ENCODE measurements at regions of chr1 and their contacts with region 1.

Region 1: GRCh38 chr1:161132410-161133219 is at the start of gene DEDD:
- DNase-seq: peak; percentile 89
- H3K4me3 ChIP-seq: peak within 1 kb of the TSS; percentile 97
- H3K27ac ChIP-seq: peak within 1 kb of the TSS; percentile 93
- H3K27me3 ChIP-seq: no peaks in the 10 kb centered on the region
- CTCF ChIP-seq: 0 out of 2 replicates have a peak, but pooled peaks have one; percentile 8
- polyA plus RNA-seq, gene DEDD: 34.9 and 38.0 TPM in 2 replicates

Region 2: DNA sequence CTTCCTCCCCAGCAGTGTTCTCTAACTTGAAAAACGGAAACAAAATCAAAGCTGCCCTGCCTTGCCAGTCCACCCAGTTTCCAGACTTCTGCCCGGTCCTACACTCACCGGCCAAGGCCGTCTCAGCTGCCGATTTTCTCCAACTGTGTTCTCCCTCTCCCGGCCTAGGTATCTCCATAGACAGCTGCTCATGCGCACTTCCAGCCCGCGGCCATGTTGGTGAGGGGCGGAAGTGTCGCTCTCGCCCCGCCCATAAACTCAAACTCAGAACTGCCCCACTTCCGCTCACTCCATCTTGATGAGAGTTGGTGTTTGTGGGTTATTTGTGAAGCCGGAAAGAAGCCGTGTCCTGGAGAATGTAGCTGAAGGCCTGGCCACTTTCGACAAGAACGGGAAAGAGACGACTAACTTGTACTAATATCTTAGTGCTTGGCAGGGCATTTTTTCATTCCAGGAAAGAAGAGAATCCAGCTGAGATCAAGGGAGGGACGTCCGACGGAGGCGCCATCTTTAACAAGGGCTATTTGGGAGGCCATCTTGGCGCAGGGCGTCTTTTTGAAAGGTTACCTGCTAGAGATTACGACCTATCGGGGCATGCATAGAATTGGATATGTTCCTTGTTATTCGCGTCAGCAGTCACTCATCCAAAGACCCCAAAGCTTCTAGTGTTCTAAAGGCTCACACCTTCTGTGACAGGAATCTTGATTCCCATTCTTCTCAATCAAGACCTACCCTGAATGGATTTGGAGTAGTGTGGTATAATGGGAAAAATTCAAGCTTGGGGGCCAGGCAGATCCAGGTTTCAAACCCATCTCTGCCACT is 86.7 kb before region 1 on chr1 and contains the start of gene USF1:
- CTCF ChIA-PET with region 1: no interaction called
- POLR2A ChIA-PET with region 1: interaction called, 10 read pairs
- DNase-seq: peak; percentile 87
- H3K4me3 ChIP-seq: peak within 1 kb of the TSS; percentile 86
- H3K27ac ChIP-seq: peak within 1 kb of the TSS; percentile 95
- H3K27me3 ChIP-seq: no peaks in the 10 kb centered on the region
- CTCF ChIP-seq: no peak
- polyA plus RNA-seq, gene USF1: 32.6 and 37.6 TPM in 2 replicates

Region 3: GRCh38 chr1:161117759-161118581 is 14.6 kb before region 1 on chr1 and contains the starts of genes NIT1 and PFDN2:
- CTCF ChIA-PET with region 1: no interaction called
- POLR2A ChIA-PET with region 1: interaction called, 20 read pairs
- DNase-seq: no peak
- H3K4me3 ChIP-seq: peak within 1 kb of the TSS; percentile 100
- H3K27ac ChIP-seq: peak within 1 kb of the TSS; percentile 95
- H3K27me3 ChIP-seq: no peaks in the 10 kb centered on the region
- CTCF ChIP-seq: no peak
- polyA plus RNA-seq, gene NIT1: 19.2 and 24.3 TPM in 2 replicates
- polyA plus RNA-seq, gene PFDN2: 84.2 and 101 TPM in 2 replicates

Measured in AG04450 (cell line).